Activated T-helper 1 cell treated with anti-CD3 and anti-CD28 coated beads, Interleukin-12 subunit alpha, Interleukin-12 subunit beta, Interleukin-2, Interleukin-4 antibody, amounts not matched to agents 30 ng/mL and 10 ng/mL and 1 ng/mL, durations not matched to agents 14 hours and 24 hours and 36 hours (primary cell): ENCODE measurements at regions of chr12 and their contacts with region 1.

Region 1: GRCh38 chr12:67647799-67648520 is 585 bp upstream of the DYRK2 start:
- DNase-seq: peak; percentile 17
- H3K4me3 Mint-ChIP-seq: peak overlapping the region; percentile 83
- H3K27ac Mint-ChIP-seq: peak overlapping the region; percentile 89
- H3K4me1 Mint-ChIP-seq: peaks cover 36% of the 10 kb centered on the region
- H3K27me3 Mint-ChIP-seq: peaks cover 3% of the 10 kb centered on the region

Region 2: GRCh38 chr12:67415473-67415872 is 232.5 kb before region 1 on chr12:
- intact Hi-C with region 1: no loop called
- DNase-seq: no peak
- H3K4me3 Mint-ChIP-seq: no peak overlapping the region
- H3K27ac Mint-ChIP-seq: no peak overlapping the region
- H3K4me1 Mint-ChIP-seq: no peaks in the 10 kb centered on the region
- H3K27me3 Mint-ChIP-seq: peaks cover 2% of the 10 kb centered on the region

Region 3: DNA sequence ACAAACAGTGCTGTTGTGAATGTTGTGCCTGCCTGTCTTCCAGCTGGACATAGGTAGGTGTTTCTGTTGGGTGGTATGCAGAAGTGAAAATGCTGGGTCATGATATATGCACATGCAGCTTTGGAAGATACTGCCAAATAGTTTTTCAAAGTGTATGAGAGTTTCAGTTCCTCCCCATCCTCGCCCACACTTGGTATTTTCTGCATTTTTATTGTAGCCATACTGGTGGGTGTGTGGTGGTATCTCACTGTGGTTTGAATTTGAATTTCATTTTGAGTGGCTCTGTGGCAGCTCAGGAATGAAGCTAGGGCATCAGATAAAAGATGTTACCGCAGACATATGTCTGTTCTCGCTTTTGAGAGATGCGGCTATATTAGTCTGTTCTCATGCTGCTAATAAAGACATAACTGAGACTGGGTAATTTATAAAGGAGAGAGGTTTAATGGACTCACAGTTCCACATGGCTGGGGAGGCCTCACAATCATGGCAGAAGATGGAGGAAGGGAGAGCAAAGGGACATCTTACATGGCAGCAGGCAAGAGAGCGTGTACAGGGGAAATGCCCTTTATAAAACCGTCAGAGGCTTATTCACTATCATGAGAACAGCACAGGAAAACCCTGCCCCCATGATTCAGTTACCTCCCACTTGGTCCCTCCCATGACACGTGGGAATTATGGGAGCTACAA is 195.7 kb before region 1 on chr12:
- intact Hi-C with region 1: loop called (anchors 2 kb)
- DNase-seq: no peak
- H3K4me3 Mint-ChIP-seq: peak overlapping the region; percentile 12
- H3K27ac Mint-ChIP-seq: peak overlapping the region; percentile 82
- H3K4me1 Mint-ChIP-seq: peaks cover 47% of the 10 kb centered on the region
- H3K27me3 Mint-ChIP-seq: peaks cover 20% of the 10 kb centered on the region

Region 4: GRCh38 chr12:67592216-67593011 is 55.5 kb before region 1 on chr12:
- intact Hi-C with region 1: loop called (anchors 2 kb)
- DNase-seq: peak; percentile 20
- H3K4me3 Mint-ChIP-seq: peak overlapping the region; percentile 41
- H3K27ac Mint-ChIP-seq: peak overlapping the region; percentile 90
- H3K4me1 Mint-ChIP-seq: peaks cover 58% of the 10 kb centered on the region
- H3K27me3 Mint-ChIP-seq: no peaks in the 10 kb centered on the region

Region 5: GRCh38 chr12:67804168-67804567 is 156.2 kb after region 1 on chr12:
- intact Hi-C with region 1: loop called (anchors 5 kb)
- DNase-seq: peak; percentile 22
- H3K4me3 Mint-ChIP-seq: no peak overlapping the region
- H3K27ac Mint-ChIP-seq: no peak overlapping the region
- H3K4me1 Mint-ChIP-seq: peaks cover 13% of the 10 kb centered on the region
- H3K27me3 Mint-ChIP-seq: peaks cover 4% of the 10 kb centered on the region

Region 6: GRCh38 chr12:68158432-68158831 is 510.5 kb after region 1 on chr12:
- intact Hi-C with region 1: loop called (anchors 5 kb)
- DNase-seq: no peak
- H3K4me3 Mint-ChIP-seq: peak overlapping the region; percentile 91
- H3K27ac Mint-ChIP-seq: peak overlapping the region; percentile 87
- H3K4me1 Mint-ChIP-seq: peaks cover 65% of the 10 kb centered on the region
- H3K27me3 Mint-ChIP-seq: no peaks in the 10 kb centered on the region